Dorsolateral prefrontal cortex (tissue), 120 donors: ENCODE measurements at regions of chr13 and their contacts with region 1.

Region 1: GRCh38 chr13:23921451-23921888 is 24.2 kb upstream of the C1QTNF9B start:
- DNase-seq: no peak
- H3K4me3 ChIP-seq: no peak overlapping the region
- H3K27ac ChIP-seq: no peak overlapping the region
- H3K27me3 ChIP-seq: peaks cover 0 to 7% (median 0%) of the 10 kb centered on the region in 45 donors
- CTCF ChIP-seq: peak; percentile 60 to 95 (median 83)

Region 2: DNA sequence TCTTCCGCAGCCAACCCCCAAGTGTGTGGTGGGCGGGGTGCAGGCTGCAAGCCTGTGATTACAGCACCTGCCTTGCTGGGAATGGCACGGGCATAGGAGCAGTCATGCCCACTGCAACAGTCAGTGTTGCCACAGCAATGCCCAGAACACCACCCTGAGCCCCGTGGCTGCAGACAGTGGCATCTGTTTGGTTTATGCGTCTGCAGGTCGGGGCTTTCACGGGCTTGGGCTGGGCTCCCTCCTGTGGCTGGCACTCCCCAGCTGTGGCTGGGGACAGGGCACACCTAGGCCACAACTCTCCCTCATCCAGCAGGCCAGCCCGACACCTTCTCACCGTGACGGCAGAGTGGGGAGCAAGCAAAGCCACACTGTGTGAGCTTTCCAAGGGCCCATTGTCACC is 91.2 kb after region 1 on chr13:
- intact Hi-C with region 1: loop called (anchors 5 kb)
- DNase-seq: peak in 1 of 10 donors; percentile 50
- H3K4me3 ChIP-seq: no peak overlapping the region
- H3K27ac ChIP-seq: no peak overlapping the region
- H3K27me3 ChIP-seq: no peaks in the 10 kb centered on the region
- CTCF ChIP-seq: peak in 30 of 56 donors; percentile 11 to 53 (median 28)

Region 3: DNA sequence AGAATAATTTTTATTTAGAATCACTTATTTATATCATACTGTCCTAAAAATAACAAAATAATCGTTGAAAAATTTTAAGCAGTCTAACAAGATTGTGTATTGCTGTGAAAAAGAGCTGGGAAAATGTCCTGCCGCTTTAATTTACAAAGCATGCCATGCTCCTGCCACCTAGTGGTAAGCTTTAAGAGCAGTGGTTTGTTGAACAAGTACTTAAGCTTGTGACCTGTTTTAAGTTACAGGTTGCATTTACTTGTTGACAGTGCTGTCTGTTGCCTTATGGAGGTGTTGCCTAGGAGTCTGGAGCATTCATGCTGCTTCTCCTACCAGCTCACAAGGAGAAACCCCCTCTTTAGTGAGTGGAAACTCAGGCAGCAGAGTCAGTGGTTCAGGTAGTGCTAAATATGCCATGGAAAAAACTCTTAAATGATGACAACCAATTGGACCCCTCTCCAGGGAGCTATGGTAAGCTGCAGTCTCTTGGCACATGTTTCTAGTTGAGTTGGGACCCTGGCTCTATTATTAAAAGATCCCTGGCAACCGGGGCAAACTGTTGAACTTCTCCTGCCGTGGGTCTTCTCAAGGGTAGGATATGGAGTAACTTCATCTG is 307.5 kb after region 1 on chr13:
- intact Hi-C with region 1: loop called (anchors 5 kb)
- DNase-seq: peak in 2 of 10 donors; percentile 27 to 52
- H3K4me3 ChIP-seq: no peak overlapping the region
- H3K27ac ChIP-seq: peak overlapping the region in 7 of 59 donors; percentile 4 to 27 (median 17)
- H3K27me3 ChIP-seq: no peaks in the 10 kb centered on the region
- CTCF ChIP-seq: peak; percentile 69 to 97 (median 89)